ENCODE measurements at regions of chr12 and their contacts with region 1.

Region 1: DNA sequence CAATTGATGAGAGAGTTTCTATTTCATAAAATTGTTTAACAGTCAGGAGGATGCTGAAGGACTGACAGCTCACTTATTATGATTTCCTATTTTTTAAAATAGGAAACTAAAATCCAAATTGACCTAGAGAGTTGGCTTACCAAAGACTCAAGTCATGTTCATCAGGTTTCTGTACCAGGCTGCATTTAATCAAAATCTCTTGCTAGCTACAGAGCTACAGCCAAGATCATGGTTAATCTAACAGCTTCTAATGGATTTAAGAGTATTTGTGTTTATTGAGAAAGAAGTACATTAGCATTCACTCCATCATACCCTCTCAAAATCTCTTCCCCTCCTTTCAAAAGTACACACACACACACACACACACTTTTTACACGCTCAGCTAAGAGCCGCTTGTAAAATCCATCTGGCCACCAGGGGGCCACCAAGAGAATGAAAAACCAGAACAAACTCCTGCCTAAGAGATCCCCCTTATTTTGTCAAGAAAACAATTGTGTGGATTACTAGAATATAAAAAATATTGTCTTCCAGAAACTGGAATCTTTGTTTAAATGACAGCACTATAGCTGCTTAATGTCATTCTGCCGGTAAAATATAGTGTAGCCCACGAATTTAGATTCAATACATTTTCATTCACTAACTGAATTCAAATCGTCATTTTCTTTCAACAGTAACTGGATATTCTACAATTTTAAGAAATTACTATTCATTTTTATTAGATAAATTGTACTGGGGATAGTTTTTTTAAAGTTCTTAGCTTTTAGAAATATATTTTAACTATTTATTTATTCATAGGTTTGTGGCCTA is 334.0 kb downstream of the BTG1 start:
- DNase-seq: peak; percentile 87
- ATAC-seq: peak; percentile 78
- H3K4me3 Mint-ChIP-seq: no peak overlapping the region
- H3K27ac Mint-ChIP-seq: peak overlapping the region; percentile 79
- H3K4me1 Mint-ChIP-seq: peaks cover 26% of the 10 kb centered on the region
- H3K27me3 Mint-ChIP-seq: no peaks in the 10 kb centered on the region
- CTCF ChIP-seq: peak; percentile 92

Region 2: GRCh38 chr12:91778938-91779400 is 32.7 kb before region 1 on chr12:
- CTCF ChIA-PET with region 1: interaction called, 14 read pairs
- POLR2A ChIA-PET with region 1: interaction called, 3 read pairs
- intact Hi-C with region 1: no loop called
- DNase-seq: peak; percentile 67
- ATAC-seq: peak; percentile 97
- H3K4me3 Mint-ChIP-seq: peak overlapping the region; percentile 66
- H3K27ac Mint-ChIP-seq: peak overlapping the region; percentile 80
- H3K4me1 Mint-ChIP-seq: peaks cover 35% of the 10 kb centered on the region
- H3K27me3 Mint-ChIP-seq: no peaks in the 10 kb centered on the region
- CTCF ChIP-seq: no peak

Region 3: DNA sequence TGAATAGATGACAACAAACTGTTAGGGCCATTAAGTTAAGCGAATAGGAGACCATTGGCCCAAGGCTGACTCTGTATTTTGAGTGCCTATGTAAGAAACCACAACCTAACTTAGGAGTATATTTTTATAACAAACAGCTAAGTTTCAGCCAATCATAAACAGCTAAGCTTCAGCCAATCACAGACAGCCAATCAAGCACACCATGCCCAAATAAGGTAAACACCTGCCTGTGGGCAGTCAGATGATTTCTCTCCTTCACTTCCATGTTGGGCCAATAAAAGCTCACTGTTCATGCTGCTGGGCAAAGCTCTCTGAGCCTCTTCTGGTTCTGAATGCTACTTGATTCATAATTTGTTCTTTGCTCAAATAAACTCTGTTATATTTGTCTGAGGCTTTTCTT is 10.6 kb before region 1 on chr12:
- CTCF ChIA-PET with region 1: interaction called, 32 read pairs
- POLR2A ChIA-PET with region 1: no interaction called
- intact Hi-C with region 1: no loop called
- DNase-seq: no peak
- ATAC-seq: no peak
- H3K4me3 Mint-ChIP-seq: no peak overlapping the region
- H3K27ac Mint-ChIP-seq: no peak overlapping the region
- H3K4me1 Mint-ChIP-seq: no peaks in the 10 kb centered on the region
- H3K27me3 Mint-ChIP-seq: no peaks in the 10 kb centered on the region
- CTCF ChIP-seq: no peak

Region 4: DNA sequence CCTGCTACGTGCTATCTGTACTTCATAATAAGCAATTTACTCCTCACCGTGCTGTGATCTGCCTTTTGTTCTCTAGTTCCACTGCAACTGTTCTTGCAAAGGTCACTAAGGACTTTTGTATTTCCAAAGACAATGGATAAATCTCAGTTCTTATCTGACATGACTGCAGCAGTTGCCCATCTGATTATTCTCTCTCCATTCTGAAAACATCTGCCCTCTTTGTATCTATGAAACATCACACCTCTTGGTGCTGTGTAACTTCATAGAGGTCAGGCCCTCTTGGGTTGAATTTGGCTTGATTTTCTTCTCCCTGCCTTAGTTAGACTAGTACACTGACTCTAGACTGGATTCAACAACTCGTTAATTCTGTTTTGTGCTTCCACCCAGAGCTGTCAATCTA is 14.3 kb after region 1 on chr12:
- CTCF ChIA-PET with region 1: interaction called, 31 read pairs
- POLR2A ChIA-PET with region 1: no interaction called
- intact Hi-C with region 1: no loop called
- DNase-seq: no peak
- ATAC-seq: no peak
- H3K4me3 Mint-ChIP-seq: no peak overlapping the region
- H3K27ac Mint-ChIP-seq: no peak overlapping the region
- H3K4me1 Mint-ChIP-seq: no peaks in the 10 kb centered on the region
- H3K27me3 Mint-ChIP-seq: no peaks in the 10 kb centered on the region
- CTCF ChIP-seq: no peak

Region 5: DNA sequence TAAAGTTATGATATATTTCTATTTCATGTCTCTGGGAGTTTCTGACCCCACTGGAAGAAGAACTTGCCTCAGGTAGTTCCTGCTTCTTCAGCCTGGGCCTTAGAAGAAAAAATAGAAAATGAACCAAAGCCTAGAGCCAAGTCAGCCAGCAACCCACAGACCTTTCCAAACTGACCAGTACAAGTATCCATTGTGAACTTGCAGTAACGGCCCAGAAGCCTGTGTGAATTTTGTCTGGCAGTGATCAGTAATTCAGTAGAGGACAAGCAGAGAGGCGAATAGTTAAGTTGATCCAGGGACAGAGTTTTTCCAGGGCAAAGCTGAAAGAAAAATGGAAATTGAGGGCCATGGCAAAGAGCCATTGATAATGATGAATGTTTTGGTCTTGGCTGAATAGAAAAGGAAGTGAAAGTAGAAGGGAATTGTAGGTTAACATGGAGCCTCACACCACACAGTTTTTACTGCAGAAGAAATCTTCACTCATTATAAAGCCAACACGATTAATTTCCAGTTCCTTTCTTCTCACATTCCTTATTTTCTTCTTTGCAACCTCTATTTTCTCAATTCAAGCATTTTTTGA is 22.2 kb after region 1 on chr12:
- CTCF ChIA-PET with region 1: interaction called, 18 read pairs
- POLR2A ChIA-PET with region 1: no interaction called
- intact Hi-C with region 1: no loop called
- DNase-seq: no peak
- ATAC-seq: no peak
- H3K4me3 Mint-ChIP-seq: no peak overlapping the region
- H3K27ac Mint-ChIP-seq: no peak overlapping the region
- H3K4me1 Mint-ChIP-seq: peaks cover 16% of the 10 kb centered on the region
- H3K27me3 Mint-ChIP-seq: no peaks in the 10 kb centered on the region
- CTCF ChIP-seq: no peak

Region 6: DNA sequence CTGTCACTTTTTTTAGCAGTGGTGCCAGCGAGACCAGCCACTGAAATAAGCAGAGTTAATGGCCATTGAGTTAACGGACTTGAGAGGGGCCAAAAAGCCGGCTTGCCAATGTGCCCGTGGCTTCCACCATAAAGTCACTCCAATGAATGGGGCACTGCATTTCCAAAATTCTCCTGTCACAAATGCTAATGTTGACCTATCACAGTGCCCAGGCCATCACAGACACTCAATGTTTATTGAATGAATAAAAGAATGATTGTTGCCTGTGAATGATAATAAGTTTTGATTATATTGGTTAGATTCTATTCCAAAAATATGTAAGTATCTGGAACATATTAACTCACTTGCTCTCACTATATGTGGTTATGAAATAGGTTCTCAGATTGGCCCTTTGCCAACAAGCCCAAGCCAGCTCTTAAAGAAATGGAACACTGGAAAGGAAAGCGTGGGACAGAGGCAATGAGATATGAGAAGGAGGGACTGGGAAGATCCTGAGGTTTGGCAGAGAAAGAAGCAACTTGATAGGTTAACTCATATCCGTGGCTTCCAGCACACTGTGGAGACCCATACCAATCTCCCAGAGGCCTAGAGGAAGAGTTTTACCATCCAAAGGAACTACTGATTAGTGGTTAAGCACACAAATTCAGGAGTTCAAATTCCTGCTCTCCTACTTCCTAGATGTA is 225.2 kb after region 1 on chr12:
- CTCF ChIA-PET with region 1: no interaction called
- POLR2A ChIA-PET with region 1: no interaction called
- intact Hi-C with region 1: no loop called
- DNase-seq: no peak
- ATAC-seq: no peak
- H3K4me3 Mint-ChIP-seq: no peak overlapping the region
- H3K27ac Mint-ChIP-seq: peak overlapping the region; percentile 47
- H3K4me1 Mint-ChIP-seq: peaks cover 80% of the 10 kb centered on the region
- H3K27me3 Mint-ChIP-seq: no peaks in the 10 kb centered on the region
- CTCF ChIP-seq: no peak

Region 7: DNA sequence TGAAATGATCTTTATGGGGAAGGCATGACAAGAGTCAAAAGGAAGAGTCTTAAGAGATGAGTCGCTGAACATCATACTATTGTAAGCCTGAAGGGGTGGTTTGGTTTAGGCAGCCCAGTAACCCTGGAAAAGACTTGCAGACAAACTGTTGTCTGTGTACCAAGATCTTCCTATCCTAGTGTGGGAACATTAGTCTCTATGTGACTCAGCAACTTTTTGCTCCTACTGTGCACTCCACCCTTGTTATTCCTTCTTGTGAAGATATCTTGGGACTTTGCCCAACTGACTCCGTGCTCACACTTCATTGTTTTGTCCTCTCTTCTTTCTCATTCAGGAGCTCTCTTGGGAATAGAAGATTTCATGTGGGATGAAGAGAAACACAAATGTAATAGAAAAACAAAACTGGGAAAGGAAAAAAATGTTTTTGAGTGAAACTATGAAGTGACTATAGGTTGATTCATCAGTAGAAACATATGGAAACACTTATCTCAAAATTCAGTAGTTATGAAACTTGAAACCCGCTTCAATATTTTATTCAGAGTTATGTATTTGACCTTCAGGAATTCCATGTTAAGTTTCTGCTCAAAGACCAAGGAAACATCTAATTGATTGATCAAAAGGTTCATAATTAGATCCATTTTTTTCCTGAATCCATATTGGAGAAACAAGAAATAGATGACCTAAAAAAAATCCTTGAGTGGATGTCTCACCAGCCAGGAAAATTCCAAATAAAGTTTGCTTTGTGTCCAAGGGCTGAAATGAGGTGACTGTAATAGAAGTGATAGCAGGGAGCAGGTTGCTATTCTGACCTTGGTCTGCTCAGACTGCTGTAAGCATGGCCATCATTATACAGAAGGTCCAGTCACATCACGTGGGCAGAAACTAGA is 266.7 kb after region 1 on chr12:
- CTCF ChIA-PET with region 1: no interaction called
- POLR2A ChIA-PET with region 1: no interaction called
- intact Hi-C with region 1: no loop called
- DNase-seq: no peak
- ATAC-seq: peak; percentile 70
- H3K4me3 Mint-ChIP-seq: no peak overlapping the region
- H3K27ac Mint-ChIP-seq: peak overlapping the region; percentile 83
- H3K4me1 Mint-ChIP-seq: peaks cover 72% of the 10 kb centered on the region
- H3K27me3 Mint-ChIP-seq: no peaks in the 10 kb centered on the region
- CTCF ChIP-seq: no peak